ENCODE measurements at regions of chr3 and their contacts with region 1.

Region 1: DNA sequence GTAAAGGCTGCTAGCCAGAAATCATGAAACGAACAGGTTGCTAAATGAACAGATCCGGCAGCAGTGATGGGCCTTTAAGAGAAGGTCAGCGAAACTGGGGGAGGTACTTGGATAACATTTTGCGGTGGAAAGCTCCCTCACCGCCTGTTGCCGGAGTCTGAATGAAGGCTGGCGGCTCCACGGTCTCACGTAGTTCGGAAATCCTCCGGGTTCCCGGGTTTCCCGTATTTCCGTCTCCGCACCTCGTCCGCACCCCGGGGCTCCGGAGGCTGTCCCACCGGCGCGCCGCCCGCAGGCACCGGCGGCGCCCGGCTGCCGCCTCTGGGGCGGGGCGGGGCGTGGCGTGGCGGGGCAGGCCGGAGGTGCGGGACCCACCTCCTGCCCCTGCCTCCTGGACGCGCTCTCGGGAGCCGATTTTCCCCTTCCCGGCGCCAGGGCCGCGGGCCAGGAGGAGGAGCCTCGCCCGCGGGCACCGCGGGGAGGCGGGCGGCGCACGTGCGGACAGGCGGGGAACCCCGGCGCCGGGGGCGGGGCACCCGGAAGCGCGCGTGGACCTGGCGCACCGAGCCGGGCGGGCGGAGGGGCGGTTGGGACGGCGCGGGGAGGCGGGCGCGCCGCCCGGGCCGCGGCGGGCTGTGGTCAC is at the start of gene ZDHHC23:
- DNase-seq: no peak
- ATAC-seq: peak; percentile 79
- H3K4me3 ChIP-seq: peak within 1 kb of the TSS; percentile 70
- H3K27ac ChIP-seq: no peak within 1 kb of the TSS
- H3K4me1 ChIP-seq: no peaks in the 10 kb centered on the region
- H3K27me3 ChIP-seq: no peaks in the 10 kb centered on the region
- CTCF ChIP-seq: 0 out of 6 replicates have a peak, but pooled peaks of 1 of the 3 experiments have one; percentile 5
- EP300 ChIP-seq: no peak
- POLR2A ChIP-seq: no peak
- RAD21 ChIP-seq: no peak
- polyA plus RNA-seq, gene ZDHHC23: 0.79 to 1.0 TPM

Region 2: GRCh38 chr3:114056130-114057010 is 108.9 kb after region 1 on chr3 and contains the starts of genes CCDC191 and QTRT2:
- CTCF ChIA-PET with region 1: no interaction called
- POLR2A ChIA-PET with region 1: no interaction called
- RAD21 ChIA-PET with region 1: no interaction called
- SMC1A ChIA-PET with region 1: no interaction called
- in situ Hi-C with region 1: no loop called
- intact Hi-C with region 1: loop called (anchors 5 kb)
- DNase-seq: peak; percentile 97
- ATAC-seq: peak; percentile 98
- H3K4me3 ChIP-seq: peak within 1 kb of the TSS; percentile 92
- H3K27ac ChIP-seq: peak within 1 kb of the TSS; percentile 72
- H3K4me1 ChIP-seq: 0 out of 2 replicates have a peak, but pooled peaks cover 2% of the 10 kb centered on the region
- H3K27me3 ChIP-seq: no peaks in the 10 kb centered on the region
- CTCF ChIP-seq: no peak
- EP300 ChIP-seq: peak in 1 of 2 experiments; percentile 77; a peak in 1 of 4 replicates
- POLR2A ChIP-seq: peak; percentile 54
- RAD21 ChIP-seq: no peak
- polyA plus RNA-seq, gene CCDC191: 1.3 to 1.6 TPM
- polyA plus RNA-seq, gene QTRT2: 17.8 to 33.5 TPM

Measured in GM12878 (cell line).